ENCODE measurements at regions of chr3 and their contacts with region 1.

Region 1: GRCh38 chr3:174495311-174495710 is 363.8 kb upstream of the NAALADL2 start:
- DNase-seq: no peak
- H3K4me3 Mint-ChIP-seq: no peak overlapping the region
- H3K27ac Mint-ChIP-seq: no peak overlapping the region
- H3K4me1 Mint-ChIP-seq: no peaks in the 10 kb centered on the region
- H3K27me3 Mint-ChIP-seq: no peaks in the 10 kb centered on the region
- CTCF ChIP-seq: no peak

Region 2: DNA sequence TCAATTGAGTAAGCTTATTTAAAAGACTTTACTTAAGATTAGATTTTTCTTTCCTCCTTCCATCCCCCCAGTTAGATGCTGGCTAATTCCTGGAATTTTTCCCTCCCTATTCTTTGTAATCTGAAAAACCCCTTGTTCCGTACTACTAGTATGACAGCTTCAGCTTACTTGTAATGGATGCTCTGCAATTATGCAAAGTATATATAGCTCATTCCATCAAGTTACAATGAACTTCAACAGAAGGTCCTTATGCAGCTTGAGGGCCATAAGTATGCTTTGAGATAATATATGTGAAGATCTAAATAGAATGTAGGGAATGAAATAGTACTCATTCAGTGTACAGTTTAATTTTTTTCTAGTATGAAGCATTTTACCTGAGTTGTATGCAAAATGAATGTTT is 34.5 kb before region 1 on chr3:
- CTCF ChIA-PET with region 1: no interaction called
- intact Hi-C with region 1: no loop called
- DNase-seq: no peak
- H3K4me3 Mint-ChIP-seq: no peak overlapping the region
- H3K27ac Mint-ChIP-seq: no peak overlapping the region
- H3K4me1 Mint-ChIP-seq: no peaks in the 10 kb centered on the region
- H3K27me3 Mint-ChIP-seq: no peaks in the 10 kb centered on the region
- CTCF ChIP-seq: no peak

Region 3: DNA sequence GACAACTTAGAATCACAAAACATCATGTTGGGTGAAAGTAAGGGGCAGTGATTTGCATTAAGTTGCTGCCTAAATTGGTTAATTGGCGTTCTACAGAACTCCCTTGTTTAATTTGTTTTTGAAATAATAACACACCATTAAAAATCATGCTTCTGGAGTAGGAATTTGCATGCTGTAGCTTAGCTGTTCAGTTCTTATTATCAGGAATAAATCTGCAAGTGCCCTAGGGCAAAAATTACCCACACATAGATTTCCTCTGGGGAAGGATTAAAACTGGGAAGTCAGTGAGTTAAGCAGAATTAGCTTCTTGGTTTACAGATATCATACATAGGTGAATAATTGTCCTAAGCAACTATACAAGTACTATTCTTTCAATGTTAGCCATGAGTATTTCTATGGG is 17.8 kb before region 1 on chr3:
- CTCF ChIA-PET with region 1: no interaction called
- intact Hi-C with region 1: loop called (anchors 2 kb)
- DNase-seq: no peak
- H3K4me3 Mint-ChIP-seq: no peak overlapping the region
- H3K27ac Mint-ChIP-seq: no peak overlapping the region
- H3K4me1 Mint-ChIP-seq: no peaks in the 10 kb centered on the region
- H3K27me3 Mint-ChIP-seq: no peaks in the 10 kb centered on the region
- CTCF ChIP-seq: no peak

Region 4: GRCh38 chr3:174659511-174659910 is 164.2 kb after region 1 on chr3:
- CTCF ChIA-PET with region 1: no interaction called
- intact Hi-C with region 1: no loop called
- DNase-seq: no peak
- H3K4me3 Mint-ChIP-seq: no peak overlapping the region
- H3K27ac Mint-ChIP-seq: no peak overlapping the region
- H3K4me1 Mint-ChIP-seq: no peaks in the 10 kb centered on the region
- H3K27me3 Mint-ChIP-seq: no peaks in the 10 kb centered on the region
- CTCF ChIP-seq: no peak

Region 5: GRCh38 chr3:176378789-176379188 is 1883.5 kb after region 1 on chr3:
- CTCF ChIA-PET with region 1: no interaction called
- intact Hi-C with region 1: no loop called
- DNase-seq: no peak
- H3K4me3 Mint-ChIP-seq: no peak overlapping the region
- H3K27ac Mint-ChIP-seq: no peak overlapping the region
- H3K4me1 Mint-ChIP-seq: no peaks in the 10 kb centered on the region
- H3K27me3 Mint-ChIP-seq: no peaks in the 10 kb centered on the region
- CTCF ChIP-seq: no peak

Measured in Calu3 (cell line).